Endothelial cell of umbilical vein (primary cell): ENCODE measurements at regions of chr2 and their contacts with region 1.

Region 1: GRCh38 chr2:25936889-25937545 is 45.3 kb downstream of the KIF3C start:
- DNase-seq: no peak
- H3K4me3 ChIP-seq: no peak overlapping the region
- H3K27ac ChIP-seq: no peak overlapping the region
- H3K4me1 ChIP-seq: peaks cover 11% of the 10 kb centered on the region
- H3K27me3 ChIP-seq: no peaks in the 10 kb centered on the region
- CTCF ChIP-seq: no peak
- POLR2A ChIP-seq: no peak

Region 2: GRCh38 chr2:25920326-25920725 is 16.7 kb before region 1 on chr2:
- CTCF ChIA-PET with region 1: interaction called, 3 read pairs
- POLR2A ChIA-PET with region 1: interaction called, 10 read pairs
- dilution Hi-C with region 1: no loop called
- intact Hi-C with region 1: no loop called
- DNase-seq: no peak
- H3K4me3 ChIP-seq: no peak overlapping the region
- H3K27ac ChIP-seq: no peak overlapping the region
- H3K4me1 ChIP-seq: no peaks in the 10 kb centered on the region
- H3K27me3 ChIP-seq: no peaks in the 10 kb centered on the region
- CTCF ChIP-seq: no peak
- POLR2A ChIP-seq: no peak

Region 3: GRCh38 chr2:25976983-25977741 is 40.1 kb after region 1 on chr2:
- CTCF ChIA-PET with region 1: no interaction called
- POLR2A ChIA-PET with region 1: no interaction called
- dilution Hi-C with region 1: no loop called
- intact Hi-C with region 1: no loop called
- DNase-seq: peak; percentile 56
- H3K4me3 ChIP-seq: no peak overlapping the region
- H3K27ac ChIP-seq: peak overlapping the region; percentile 4
- H3K4me1 ChIP-seq: peaks cover 46% of the 10 kb centered on the region
- H3K27me3 ChIP-seq: no peaks in the 10 kb centered on the region
- CTCF ChIP-seq: no peak
- POLR2A ChIP-seq: no peak

Region 4: GRCh38 chr2:26300234-26300925 is 363.4 kb after region 1 on chr2:
- CTCF ChIA-PET with region 1: no interaction called
- POLR2A ChIA-PET with region 1: no interaction called
- dilution Hi-C with region 1: no loop called
- intact Hi-C with region 1: no loop called
- DNase-seq: peak; percentile 57
- H3K4me3 ChIP-seq: peak overlapping the region in 1 of 3 experiments; percentile 23
- H3K27ac ChIP-seq: peak overlapping the region; percentile 64
- H3K4me1 ChIP-seq: peaks cover 15% of the 10 kb centered on the region
- H3K27me3 ChIP-seq: no peaks in the 10 kb centered on the region
- CTCF ChIP-seq: no peak
- POLR2A ChIP-seq: no peak